CD4-positive, alpha-beta memory T cell (primary cell): ENCODE measurements at regions of chr5 and their contacts with region 1.

Region 1: GRCh38 chr5:165175041-165175440 is 1669.6 kb downstream of the MAT2B start:
- DNase-seq: no peak
- H3K4me3 ChIP-seq: no peak overlapping the region
- H3K4me3 Mint-ChIP-seq: no peak overlapping the region
- H3K27ac ChIP-seq: no peak overlapping the region
- H3K27ac Mint-ChIP-seq: no peak overlapping the region
- H3K4me1 ChIP-seq: no peaks in the 10 kb centered on the region
- H3K4me1 Mint-ChIP-seq: no peaks in the 10 kb centered on the region
- H3K27me3 ChIP-seq: no peaks in the 10 kb centered on the region
- H3K27me3 Mint-ChIP-seq: no peaks in the 10 kb centered on the region

Region 2: GRCh38 chr5:165188556-165189175 is 13.6 kb after region 1 on chr5:
- CTCF ChIA-PET with region 1: no interaction called
- POLR2A ChIA-PET with region 1: no interaction called
- intact Hi-C with region 1: no loop called
- DNase-seq: no peak
- H3K4me3 ChIP-seq: no peak overlapping the region
- H3K4me3 Mint-ChIP-seq: no peak overlapping the region
- H3K27ac ChIP-seq: no peak overlapping the region
- H3K27ac Mint-ChIP-seq: no peak overlapping the region
- H3K4me1 ChIP-seq: no peaks in the 10 kb centered on the region
- H3K4me1 Mint-ChIP-seq: no peaks in the 10 kb centered on the region
- H3K27me3 ChIP-seq: no peaks in the 10 kb centered on the region
- H3K27me3 Mint-ChIP-seq: no peaks in the 10 kb centered on the region

Region 3: GRCh38 chr5:165232509-165233028 is 57.5 kb after region 1 on chr5:
- CTCF ChIA-PET with region 1: no interaction called
- POLR2A ChIA-PET with region 1: no interaction called
- intact Hi-C with region 1: loop called (anchors 10 kb)
- DNase-seq: no peak
- H3K4me3 ChIP-seq: no peak overlapping the region
- H3K4me3 Mint-ChIP-seq: no peak overlapping the region
- H3K27ac ChIP-seq: no peak overlapping the region
- H3K27ac Mint-ChIP-seq: no peak overlapping the region
- H3K4me1 ChIP-seq: no peaks in the 10 kb centered on the region
- H3K4me1 Mint-ChIP-seq: no peaks in the 10 kb centered on the region
- H3K27me3 ChIP-seq: no peaks in the 10 kb centered on the region
- H3K27me3 Mint-ChIP-seq: no peaks in the 10 kb centered on the region

Region 4: DNA sequence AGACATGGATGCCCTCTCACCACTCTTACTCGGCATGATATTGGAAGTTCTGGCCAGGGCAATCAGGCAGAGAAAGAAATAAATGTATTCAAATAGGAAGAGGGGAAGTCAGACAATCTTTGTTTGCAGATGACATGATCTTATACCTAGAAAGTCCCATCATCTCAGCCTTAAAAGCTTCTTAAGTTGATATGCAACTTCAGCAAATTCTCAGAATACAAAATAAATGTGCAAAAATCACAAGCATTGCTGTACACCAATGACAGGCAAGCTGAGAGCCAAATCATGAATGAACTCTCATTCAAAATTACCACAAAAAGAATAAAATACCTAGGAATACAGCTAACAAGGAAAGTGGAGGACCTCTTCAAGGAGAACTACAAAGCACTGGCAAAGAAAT is 520.8 kb after region 1 on chr5:
- CTCF ChIA-PET with region 1: no interaction called
- POLR2A ChIA-PET with region 1: no interaction called
- intact Hi-C with region 1: no loop called
- DNase-seq: no peak
- H3K4me3 ChIP-seq: no peak overlapping the region
- H3K4me3 Mint-ChIP-seq: no peak overlapping the region
- H3K27ac ChIP-seq: no peak overlapping the region
- H3K27ac Mint-ChIP-seq: no peak overlapping the region
- H3K4me1 ChIP-seq: no peaks in the 10 kb centered on the region
- H3K4me1 Mint-ChIP-seq: no peaks in the 10 kb centered on the region
- H3K27me3 ChIP-seq: no peaks in the 10 kb centered on the region
- H3K27me3 Mint-ChIP-seq: no peaks in the 10 kb centered on the region